Endothelial cell of umbilical vein (primary cell): ENCODE measurements at regions of chr15 and their contacts with region 1.

Region 1: DNA sequence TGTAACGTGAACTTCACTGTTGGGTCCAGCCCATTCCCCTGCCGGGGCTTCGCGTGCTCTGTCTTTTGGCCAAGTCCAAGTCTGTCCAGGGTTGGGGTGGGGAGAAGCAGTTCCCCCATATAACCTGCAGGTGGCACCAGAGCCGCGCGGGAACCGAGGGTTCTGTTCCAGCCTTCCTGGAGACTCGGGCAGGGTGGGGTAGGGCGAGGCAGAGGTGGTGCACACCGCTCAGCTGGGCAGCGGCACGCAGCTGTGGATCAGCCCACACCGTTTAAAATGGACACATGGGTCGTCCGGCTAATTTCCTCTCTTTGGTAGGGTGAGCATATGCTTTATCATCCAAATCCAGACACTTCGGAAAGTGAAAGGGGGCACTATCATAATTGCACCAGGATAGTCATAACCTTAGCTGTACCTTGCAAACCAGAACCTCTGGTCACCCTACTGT is 118.1 kb downstream of the TBC1D2B start:
- DNase-seq: peak; percentile 76
- H3K4me3 ChIP-seq: peak overlapping the region in 1 of 3 experiments; percentile 32
- H3K27ac ChIP-seq: no peak overlapping the region
- H3K4me1 ChIP-seq: no peaks in the 10 kb centered on the region
- H3K27me3 ChIP-seq: peaks cover 3 to 8% of the 10 kb centered on the region in 2 experiments
- CTCF ChIP-seq: peak; percentile 84 to 93
- POLR2A ChIP-seq: no peak

Region 2: DNA sequence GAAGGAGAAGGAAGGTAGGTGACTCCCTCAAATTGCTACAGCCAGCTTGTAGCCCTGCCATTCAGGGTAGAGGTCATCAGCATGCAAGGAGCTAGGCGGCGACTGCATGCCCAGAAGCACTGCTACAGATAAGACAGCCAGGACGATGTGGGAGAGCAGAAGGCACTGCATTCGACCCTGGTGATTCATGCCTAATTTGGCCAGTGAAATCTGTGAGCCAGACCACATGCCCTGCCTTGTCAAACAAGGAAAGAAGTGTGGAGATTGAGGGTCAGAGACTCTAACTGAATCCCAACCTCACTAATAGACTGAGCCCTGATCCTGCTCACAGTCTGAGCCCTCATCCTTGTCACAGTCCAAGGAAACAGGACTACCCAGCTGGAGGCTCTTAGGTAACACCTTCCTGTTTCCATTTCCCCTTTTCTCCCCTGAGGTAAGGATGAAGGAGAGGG is 413.4 kb before region 1 on chr15:
- CTCF ChIA-PET with region 1: no interaction called
- POLR2A ChIA-PET with region 1: no interaction called
- dilution Hi-C with region 1: no loop called
- intact Hi-C with region 1: no loop called
- DNase-seq: peak; percentile 39
- H3K4me3 ChIP-seq: no peak overlapping the region
- H3K27ac ChIP-seq: no peak overlapping the region
- H3K4me1 ChIP-seq: peaks cover 12% of the 10 kb centered on the region
- H3K27me3 ChIP-seq: no peaks in the 10 kb centered on the region
- CTCF ChIP-seq: no peak
- POLR2A ChIP-seq: no peak

Region 3: GRCh38 chr15:77944002-77944867 is 15.2 kb before region 1 on chr15:
- CTCF ChIA-PET with region 1: interaction called, 4 read pairs
- POLR2A ChIA-PET with region 1: no interaction called
- dilution Hi-C with region 1: no loop called
- intact Hi-C with region 1: loop called (anchors 1 kb)
- DNase-seq: peak; percentile 82
- H3K4me3 ChIP-seq: peak overlapping the region; percentile 21 to 50 (median 46)
- H3K27ac ChIP-seq: peak overlapping the region; percentile 34
- H3K4me1 ChIP-seq: peaks cover 6% of the 10 kb centered on the region
- H3K27me3 ChIP-seq: no peaks in the 10 kb centered on the region
- CTCF ChIP-seq: no peak
- POLR2A ChIP-seq: peak; percentile 40

Region 4: GRCh38 chr15:77992356-77993222 is 33.1 kb after region 1 on chr15:
- CTCF ChIA-PET with region 1: interaction called, 6 read pairs
- POLR2A ChIA-PET with region 1: no interaction called
- dilution Hi-C with region 1: no loop called
- intact Hi-C with region 1: loop called (anchors 1 kb)
- DNase-seq: no peak
- H3K4me3 ChIP-seq: no peak overlapping the region
- H3K27ac ChIP-seq: no peak overlapping the region
- H3K4me1 ChIP-seq: peaks cover 23% of the 10 kb centered on the region
- H3K27me3 ChIP-seq: no peaks in the 10 kb centered on the region
- CTCF ChIP-seq: no peak
- POLR2A ChIP-seq: no peak

Region 5: GRCh38 chr15:78000091-78000926 is 40.9 kb after region 1 on chr15:
- CTCF ChIA-PET with region 1: interaction called, 10 read pairs
- POLR2A ChIA-PET with region 1: no interaction called
- dilution Hi-C with region 1: no loop called
- intact Hi-C with region 1: no loop called
- DNase-seq: peak; percentile 79
- H3K4me3 ChIP-seq: no peak overlapping the region
- H3K27ac ChIP-seq: no peak overlapping the region
- H3K4me1 ChIP-seq: no peaks in the 10 kb centered on the region
- H3K27me3 ChIP-seq: no peaks in the 10 kb centered on the region
- CTCF ChIP-seq: peak; percentile 83 to 88
- POLR2A ChIP-seq: no peak

Region 6: GRCh38 chr15:78663703-78664102 is 704.2 kb after region 1 on chr15:
- CTCF ChIA-PET with region 1: no interaction called
- POLR2A ChIA-PET with region 1: no interaction called
- dilution Hi-C with region 1: no loop called
- intact Hi-C with region 1: no loop called
- DNase-seq: no peak
- H3K4me3 ChIP-seq: no peak overlapping the region
- H3K27ac ChIP-seq: no peak overlapping the region
- H3K4me1 ChIP-seq: no peaks in the 10 kb centered on the region
- H3K27me3 ChIP-seq: peaks cover 4% of the 10 kb centered on the region in 2 experiments
- CTCF ChIP-seq: no peak
- POLR2A ChIP-seq: no peak